ENCODE measurements at regions of chr5 and their contacts with region 1.

Region 1: DNA sequence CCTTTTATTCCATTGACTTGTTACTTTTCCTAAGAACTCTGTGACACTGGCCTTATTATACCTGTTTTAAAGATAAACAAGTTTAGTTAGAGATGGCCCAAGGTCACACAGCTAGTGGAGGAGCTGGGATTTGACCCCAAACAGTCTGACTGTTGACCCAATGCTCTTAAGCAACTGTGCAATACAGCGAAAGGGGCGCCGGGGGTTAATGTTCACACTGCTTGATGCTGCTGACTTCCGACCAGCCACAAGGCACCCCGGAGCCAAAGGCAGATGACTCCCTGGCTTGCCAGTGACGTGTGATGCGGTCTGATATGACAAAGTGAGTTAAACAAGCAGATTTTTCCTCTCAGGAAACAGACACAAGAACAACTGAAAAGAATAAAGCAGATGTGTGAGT is 23.9 kb downstream of the PIK3R1 start:
- DNase-seq: peak; percentile 78 to 92
- ATAC-seq: peak; percentile 92 to 98 (median 96)
- H3K4me3 ChIP-seq: no peak overlapping the region
- H3K4me3 Mint-ChIP-seq: peak overlapping the region; percentile 64
- H3K27ac ChIP-seq: peak overlapping the region; percentile 71
- H3K27ac Mint-ChIP-seq: peak overlapping the region; percentile 86 to 98
- H3K4me1 ChIP-seq: peaks cover 31% of the 10 kb centered on the region
- H3K4me1 Mint-ChIP-seq: peaks cover 77 to 79% of the 10 kb centered on the region in 2 donors
- H3K27me3 ChIP-seq: no peaks in the 10 kb centered on the region
- H3K27me3 Mint-ChIP-seq: no peaks in the 10 kb centered on the region
- CTCF ChIP-seq: no peak

Region 2: GRCh38 chr5:68215208-68215897 is 24.1 kb before region 1 on chr5 and contains the start of gene PIK3R1:
- intact Hi-C with region 1: loop called (anchors 1 kb)
- DNase-seq: peak; percentile 95
- ATAC-seq: peak; percentile 81 to 95 (median 86)
- H3K4me3 ChIP-seq: peak within 1 kb of the TSS; percentile 94
- H3K4me3 Mint-ChIP-seq: peak within 1 kb of the TSS; percentile 92
- H3K27ac ChIP-seq: peak within 1 kb of the TSS; percentile 98
- H3K27ac Mint-ChIP-seq: peak within 1 kb of the TSS; percentile 86 to 90
- H3K4me1 ChIP-seq: peaks cover 13% of the 10 kb centered on the region
- H3K4me1 Mint-ChIP-seq: peaks cover 38 to 48% of the 10 kb centered on the region in 2 donors
- H3K27me3 ChIP-seq: no peaks in the 10 kb centered on the region
- H3K27me3 Mint-ChIP-seq: no peaks in the 10 kb centered on the region
- CTCF ChIP-seq: peak; percentile 19
- total RNA-seq, gene PIK3R1: 307 to 365 (median 313) TPM

Measured in natural killer cell (primary cell).